ENCODE measurements at regions of chr1 and their contacts with region 1.

Region 1: GRCh38 chr1:200917291-200917817 is 22.7 kb downstream of the INAVA start:
- DNase-seq: no peak
- H3K4me3 ChIP-seq: no peak overlapping the region
- H3K27ac ChIP-seq: no peak overlapping the region
- H3K4me1 ChIP-seq: peaks cover 0 to 7% (median 5%) of the 10 kb centered on the region in 4 experiments; a peak in 3 of 7 replicates
- H3K27me3 ChIP-seq: no peaks in the 10 kb centered on the region
- CTCF ChIP-seq: no peak
- EP300 ChIP-seq: no peak
- POLR2A ChIP-seq: no peak
- RAD21 ChIP-seq: no peak

Region 2: GRCh38 chr1:200654660-200655059 is 262.7 kb before region 1 on chr1:
- CTCF ChIA-PET with region 1: no interaction called
- POLR2A ChIA-PET with region 1: no interaction called
- DNase-seq: no peak
- H3K4me3 ChIP-seq: no peak overlapping the region
- H3K27ac ChIP-seq: no peak overlapping the region
- H3K4me1 ChIP-seq: no peaks in the 10 kb centered on the region; a peak in 1 of 7 replicates
- H3K27me3 ChIP-seq: no peaks in the 10 kb centered on the region
- CTCF ChIP-seq: no peak
- EP300 ChIP-seq: no peak
- POLR2A ChIP-seq: no peak
- RAD21 ChIP-seq: no peak

Region 3: DNA sequence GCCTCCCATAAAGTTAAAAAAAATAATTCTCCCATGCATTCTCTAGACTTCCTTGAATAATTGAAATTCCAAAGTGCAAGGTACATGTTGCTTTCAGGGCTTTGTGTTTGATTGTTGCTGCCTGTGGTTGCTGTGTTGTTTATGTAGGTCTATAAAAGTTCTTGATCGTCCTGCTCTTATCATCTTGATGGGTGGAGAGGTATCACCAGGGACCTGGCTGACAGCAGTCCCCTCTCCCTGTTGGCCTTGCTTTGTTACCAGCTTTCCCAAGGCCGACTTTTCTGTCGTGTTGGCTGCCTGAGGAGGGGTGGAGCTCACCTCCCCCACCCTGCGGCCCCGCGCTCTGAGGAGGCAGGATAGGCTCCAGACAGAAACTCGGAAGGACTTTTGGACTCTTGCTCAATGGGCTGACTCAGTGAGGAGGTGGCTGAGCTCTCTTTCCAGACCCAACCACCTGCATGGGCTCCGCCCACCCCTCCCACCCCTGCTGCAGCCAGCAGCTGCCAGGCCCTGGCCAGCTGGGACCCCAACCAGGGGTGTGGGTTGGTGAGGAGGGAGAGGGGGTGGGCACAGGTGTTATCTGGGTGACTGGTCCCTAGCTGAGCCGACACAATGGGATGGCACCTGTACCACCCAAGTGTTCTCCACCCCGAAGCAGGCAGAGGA is 20.7 kb before region 1 on chr1:
- CTCF ChIA-PET with region 1: interaction called, 17 read pairs
- POLR2A ChIA-PET with region 1: interaction called, 208 read pairs
- DNase-seq: no peak
- H3K4me3 ChIP-seq: no peak overlapping the region
- H3K27ac ChIP-seq: no peak overlapping the region
- H3K4me1 ChIP-seq: peaks cover 13 to 39% (median 30%) of the 10 kb centered on the region in 4 experiments
- H3K27me3 ChIP-seq: no peaks in the 10 kb centered on the region
- CTCF ChIP-seq: no peak
- EP300 ChIP-seq: no peak
- POLR2A ChIP-seq: no peak
- RAD21 ChIP-seq: no peak

Region 4: GRCh38 chr1:200901796-200902444 is 15.4 kb before region 1 on chr1:
- CTCF ChIA-PET with region 1: interaction called, 17 read pairs
- POLR2A ChIA-PET with region 1: interaction called, 208 read pairs
- DNase-seq: no peak
- H3K4me3 ChIP-seq: no peak overlapping the region
- H3K27ac ChIP-seq: no peak overlapping the region
- H3K4me1 ChIP-seq: peaks cover 0 to 2% (median 0%) of the 10 kb centered on the region in 4 experiments; a peak in 3 of 7 replicates
- H3K27me3 ChIP-seq: no peaks in the 10 kb centered on the region
- CTCF ChIP-seq: no peak
- EP300 ChIP-seq: no peak
- POLR2A ChIP-seq: no peak
- RAD21 ChIP-seq: no peak